Calu3 (cell line): ENCODE measurements at regions of chr9 and their contacts with region 1.

Region 1: DNA sequence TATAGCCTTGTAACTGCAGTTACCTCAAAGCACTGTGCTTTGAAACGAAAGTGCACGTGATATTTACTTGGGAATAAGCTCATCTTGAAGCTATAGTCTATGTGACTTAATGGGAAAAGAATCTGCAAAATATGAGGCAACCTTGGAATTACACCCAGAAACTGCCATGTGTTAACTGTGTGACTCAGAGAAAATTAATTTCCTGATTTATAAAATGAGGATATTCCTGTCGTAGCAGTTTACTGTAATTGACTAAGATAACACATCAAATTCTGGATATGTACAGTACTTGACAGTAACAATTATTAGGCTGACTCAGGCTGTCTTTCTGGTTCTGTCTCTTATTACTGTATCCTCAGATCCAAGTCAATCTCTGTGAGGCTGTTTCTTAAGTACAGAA is 1079.9 kb upstream of the ACO1 start:
- DNase-seq: no peak
- H3K4me3 Mint-ChIP-seq: no peak overlapping the region
- H3K27ac Mint-ChIP-seq: no peak overlapping the region
- H3K4me1 Mint-ChIP-seq: no peaks in the 10 kb centered on the region
- H3K27me3 Mint-ChIP-seq: no peaks in the 10 kb centered on the region
- CTCF ChIP-seq: no peak

Region 2: GRCh38 chr9:31119882-31120454 is 184.6 kb before region 1 on chr9:
- CTCF ChIA-PET with region 1: interaction called, 3 read pairs
- intact Hi-C with region 1: loop called (anchors 10 kb)
- DNase-seq: peak; percentile 11
- H3K4me3 Mint-ChIP-seq: no peak overlapping the region
- H3K27ac Mint-ChIP-seq: no peak overlapping the region
- H3K4me1 Mint-ChIP-seq: no peaks in the 10 kb centered on the region
- H3K27me3 Mint-ChIP-seq: no peaks in the 10 kb centered on the region
- CTCF ChIP-seq: peak; percentile 40

Region 3: DNA sequence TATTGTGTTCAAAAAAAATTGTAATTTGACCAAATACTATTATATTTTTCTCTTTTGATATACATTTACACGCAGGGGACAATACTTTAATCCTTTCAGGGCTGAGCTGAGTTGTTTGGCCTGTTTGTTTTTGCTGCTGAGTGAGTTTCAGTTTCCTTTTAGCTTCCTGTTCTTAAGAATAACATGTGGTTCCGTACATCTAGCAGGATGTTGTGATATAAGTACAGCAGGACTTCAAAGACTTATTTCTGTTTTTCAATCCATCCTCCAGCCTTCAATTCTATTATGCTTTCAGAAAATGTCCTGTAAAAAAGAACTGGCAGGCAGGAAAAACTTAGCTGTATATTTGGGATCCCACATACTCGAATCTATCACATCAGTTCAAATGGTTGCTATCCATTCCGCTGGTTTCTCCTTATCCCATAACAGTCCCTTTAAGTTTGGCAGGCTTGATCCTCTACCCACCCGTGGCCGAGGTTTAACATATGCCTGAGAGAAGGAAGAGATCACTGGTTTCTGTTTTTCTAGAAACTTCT is 42.6 kb after region 1 on chr9:
- CTCF ChIA-PET with region 1: no interaction called
- intact Hi-C with region 1: no loop called
- DNase-seq: peak; percentile 2
- H3K4me3 Mint-ChIP-seq: peak overlapping the region; percentile 53
- H3K27ac Mint-ChIP-seq: peak overlapping the region; percentile 89
- H3K4me1 Mint-ChIP-seq: no peaks in the 10 kb centered on the region
- H3K27me3 Mint-ChIP-seq: no peaks in the 10 kb centered on the region
- CTCF ChIP-seq: no peak